GM12878 (cell line): ENCODE measurements at regions of chr4 and their contacts with region 1.

Region 1: DNA sequence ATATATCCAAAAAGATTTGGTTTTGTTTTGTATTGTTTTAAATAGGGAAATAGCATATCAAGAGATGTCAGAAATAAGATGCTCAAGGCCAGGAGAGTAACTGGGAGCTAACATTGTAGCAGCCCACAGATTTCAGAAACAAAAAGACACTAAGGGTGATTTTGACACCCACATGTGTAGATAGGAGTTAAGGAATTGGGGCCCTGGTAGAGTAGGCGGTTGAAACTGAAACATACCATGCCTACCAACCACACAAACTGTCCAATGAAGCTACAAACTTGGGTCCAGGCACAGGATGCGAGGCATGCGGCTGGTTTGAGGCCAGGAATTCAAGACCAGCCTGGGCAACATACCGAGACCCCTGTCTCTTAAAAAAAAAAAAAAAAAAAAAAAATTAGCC is 6.3 kb upstream of the HSPA4L start:
- DNase-seq: no peak
- ATAC-seq: peak; percentile 51
- H3K4me3 ChIP-seq: no peak overlapping the region
- H3K27ac ChIP-seq: no peak overlapping the region
- H3K4me1 ChIP-seq: peaks cover 6% of the 10 kb centered on the region; the same call in 1 of the 2 replicates
- H3K27me3 ChIP-seq: no peaks in the 10 kb centered on the region
- CTCF ChIP-seq: no peak
- EP300 ChIP-seq: no peak
- POLR2A ChIP-seq: no peak
- RAD21 ChIP-seq: no peak

Region 2: DNA sequence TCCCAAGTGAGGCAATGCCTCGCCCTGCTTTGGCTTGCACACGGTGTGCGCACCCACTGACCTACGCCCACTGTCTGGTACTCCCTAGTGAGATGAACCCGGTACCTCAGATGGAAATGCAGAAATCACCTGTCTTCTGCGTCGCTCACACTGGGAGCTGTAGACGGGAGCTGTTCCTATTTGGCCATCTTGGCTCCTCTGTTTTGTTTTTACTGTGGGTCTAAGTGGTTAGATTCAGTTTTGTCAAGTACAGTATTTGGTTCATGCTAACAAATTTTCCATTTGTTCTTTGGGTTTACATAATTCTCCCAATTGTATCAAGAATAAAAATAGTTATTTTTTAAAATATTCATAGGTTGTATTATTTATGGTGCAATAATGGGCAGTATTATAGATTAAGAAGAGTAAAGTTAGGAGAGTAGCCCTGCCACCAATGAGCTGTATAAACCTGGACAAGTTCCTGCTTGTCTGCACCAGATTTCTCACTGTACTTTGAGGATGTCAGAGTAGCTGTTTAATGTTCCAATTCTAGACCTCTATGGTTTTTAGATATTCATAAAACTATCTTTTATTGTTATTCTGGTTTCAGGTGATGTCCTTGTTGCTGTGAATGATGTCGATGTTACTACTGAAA is 119.7 kb before region 1 on chr4:
- CTCF ChIA-PET with region 1: no interaction called
- POLR2A ChIA-PET with region 1: no interaction called
- RAD21 ChIA-PET with region 1: no interaction called
- SMC1A ChIA-PET with region 1: no interaction called
- in situ Hi-C with region 1: no loop called
- intact Hi-C with region 1: no loop called
- DNase-seq: no peak
- ATAC-seq: no peak
- H3K4me3 ChIP-seq: no peak overlapping the region
- H3K27ac ChIP-seq: no peak overlapping the region
- H3K4me1 ChIP-seq: no peaks in the 10 kb centered on the region
- H3K27me3 ChIP-seq: no peaks in the 10 kb centered on the region
- CTCF ChIP-seq: no peak
- EP300 ChIP-seq: no peak
- POLR2A ChIP-seq: no peak
- RAD21 ChIP-seq: no peak

Region 3: GRCh38 chr4:127667116-127667515 is 108.7 kb before region 1 on chr4:
- CTCF ChIA-PET with region 1: no interaction called
- POLR2A ChIA-PET with region 1: no interaction called
- RAD21 ChIA-PET with region 1: no interaction called
- SMC1A ChIA-PET with region 1: no interaction called
- in situ Hi-C with region 1: no loop called
- intact Hi-C with region 1: no loop called
- DNase-seq: no peak
- ATAC-seq: no peak
- H3K4me3 ChIP-seq: no peak overlapping the region
- H3K27ac ChIP-seq: no peak overlapping the region
- H3K4me1 ChIP-seq: no peaks in the 10 kb centered on the region
- H3K27me3 ChIP-seq: no peaks in the 10 kb centered on the region; a peak in 1 of 4 replicates
- CTCF ChIP-seq: no peak
- EP300 ChIP-seq: no peak
- POLR2A ChIP-seq: no peak
- RAD21 ChIP-seq: no peak

Region 4: DNA sequence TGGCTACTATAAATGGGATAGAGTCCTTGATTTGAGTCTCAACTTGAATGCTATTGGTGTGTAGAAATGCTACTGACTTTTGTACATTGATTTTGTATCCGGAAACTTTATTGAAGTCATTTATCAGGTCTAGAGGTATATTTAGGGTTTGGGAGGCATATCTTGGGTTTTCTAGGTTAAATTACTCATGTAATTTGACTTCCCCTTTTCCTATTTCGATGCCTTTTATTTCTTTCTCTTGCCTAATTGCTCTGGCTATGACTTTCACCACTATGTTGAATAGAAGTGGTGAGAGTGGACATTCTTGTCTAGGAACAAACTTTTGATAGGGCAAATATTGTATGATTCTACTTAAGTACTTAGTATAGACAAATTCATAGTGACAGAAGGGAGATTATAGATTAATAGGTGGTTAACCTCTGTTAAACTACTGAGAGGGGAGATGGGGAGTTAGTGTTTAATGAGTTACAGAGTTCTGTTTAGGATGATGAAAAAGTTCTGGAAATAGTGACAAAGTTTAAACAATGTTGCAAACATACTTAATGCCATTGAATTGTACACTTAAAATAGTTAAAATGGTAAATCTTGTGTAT is 16.5 kb before region 1 on chr4:
- CTCF ChIA-PET with region 1: interaction called, 10 read pairs
- POLR2A ChIA-PET with region 1: no interaction called
- RAD21 ChIA-PET with region 1: no interaction called
- SMC1A ChIA-PET with region 1: interaction called, 11 read pairs
- in situ Hi-C with region 1: no loop called
- intact Hi-C with region 1: no loop called
- DNase-seq: no peak
- ATAC-seq: peak; percentile 57
- H3K4me3 ChIP-seq: no peak overlapping the region
- H3K27ac ChIP-seq: no peak overlapping the region
- H3K4me1 ChIP-seq: no peaks in the 10 kb centered on the region
- H3K27me3 ChIP-seq: no peaks in the 10 kb centered on the region
- CTCF ChIP-seq: no peak
- EP300 ChIP-seq: no peak
- POLR2A ChIP-seq: no peak
- RAD21 ChIP-seq: no peak

Region 5: GRCh38 chr4:127788517-127788916 is 12.7 kb after region 1 on chr4:
- CTCF ChIA-PET with region 1: interaction called, 7 read pairs
- POLR2A ChIA-PET with region 1: interaction called, 4 read pairs
- RAD21 ChIA-PET with region 1: no interaction called
- SMC1A ChIA-PET with region 1: interaction called, 10 read pairs
- in situ Hi-C with region 1: no loop called
- intact Hi-C with region 1: no loop called
- DNase-seq: no peak
- ATAC-seq: peak; percentile 59
- H3K4me3 ChIP-seq: no peak overlapping the region
- H3K27ac ChIP-seq: no peak overlapping the region
- H3K4me1 ChIP-seq: no peaks in the 10 kb centered on the region
- H3K27me3 ChIP-seq: no peaks in the 10 kb centered on the region
- CTCF ChIP-seq: peak in 2 of 3 experiments; percentile 16 to 19; a peak in 2 of 6 replicates
- EP300 ChIP-seq: no peak
- POLR2A ChIP-seq: no peak
- RAD21 ChIP-seq: no peak